BJ (cell line): ENCODE measurements at regions of chr10 and their contacts with region 1.

Region 1: GRCh38 chr10:104121520-104122224 is at the start of gene SFR1:
- DNase-seq: peak; percentile 94
- H3K4me3 ChIP-seq: peak within 1 kb of the TSS; percentile 70
- H3K27me3 ChIP-seq: no peaks in the 10 kb centered on the region
- CTCF ChIP-seq: peak; percentile 60
- polyA plus RNA-seq, gene SFR1: 1.5 and 2.4 TPM in 2 replicates

Region 2: DNA sequence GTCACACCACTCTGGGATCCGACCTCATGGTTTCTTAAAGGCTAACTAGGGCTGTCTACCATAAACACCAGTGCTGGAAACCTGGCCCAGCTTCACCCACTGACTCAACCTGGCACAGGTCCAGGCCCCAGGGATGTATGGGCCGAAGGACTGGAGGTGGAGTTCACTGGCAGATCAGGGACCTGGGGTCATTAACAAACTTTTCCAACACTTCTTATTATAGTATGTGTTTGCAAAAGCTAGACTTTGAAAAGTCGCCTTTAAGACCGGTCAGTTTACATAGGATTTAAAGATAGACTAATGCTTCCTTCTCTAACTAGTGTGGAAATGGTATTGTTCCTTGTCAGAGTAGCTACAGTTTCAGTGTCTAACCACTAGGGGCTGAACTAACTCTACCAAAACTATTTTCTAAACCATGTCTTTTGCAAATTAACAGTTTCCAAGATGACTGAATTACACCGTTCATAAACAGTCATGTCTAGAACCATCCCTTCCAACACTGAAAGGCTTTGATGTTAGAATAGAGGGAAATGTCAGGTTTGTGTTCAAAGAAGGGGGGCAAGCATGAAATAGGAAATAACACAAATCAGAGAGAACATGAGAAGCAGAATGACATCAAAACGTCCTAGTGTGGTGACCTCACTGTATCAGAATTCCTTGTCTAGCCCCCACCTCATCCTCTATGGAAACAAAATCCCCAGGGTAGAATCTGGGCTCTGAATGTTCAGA is 233.4 kb before region 1 on chr10:
- CTCF ChIA-PET with region 1: interaction called, 12 read pairs
- POLR2A ChIA-PET with region 1: no interaction called
- DNase-seq: peak; percentile 31
- H3K4me3 ChIP-seq: no peak overlapping the region
- H3K27me3 ChIP-seq: no peaks in the 10 kb centered on the region
- CTCF ChIP-seq: peak; percentile 77

Region 3: DNA sequence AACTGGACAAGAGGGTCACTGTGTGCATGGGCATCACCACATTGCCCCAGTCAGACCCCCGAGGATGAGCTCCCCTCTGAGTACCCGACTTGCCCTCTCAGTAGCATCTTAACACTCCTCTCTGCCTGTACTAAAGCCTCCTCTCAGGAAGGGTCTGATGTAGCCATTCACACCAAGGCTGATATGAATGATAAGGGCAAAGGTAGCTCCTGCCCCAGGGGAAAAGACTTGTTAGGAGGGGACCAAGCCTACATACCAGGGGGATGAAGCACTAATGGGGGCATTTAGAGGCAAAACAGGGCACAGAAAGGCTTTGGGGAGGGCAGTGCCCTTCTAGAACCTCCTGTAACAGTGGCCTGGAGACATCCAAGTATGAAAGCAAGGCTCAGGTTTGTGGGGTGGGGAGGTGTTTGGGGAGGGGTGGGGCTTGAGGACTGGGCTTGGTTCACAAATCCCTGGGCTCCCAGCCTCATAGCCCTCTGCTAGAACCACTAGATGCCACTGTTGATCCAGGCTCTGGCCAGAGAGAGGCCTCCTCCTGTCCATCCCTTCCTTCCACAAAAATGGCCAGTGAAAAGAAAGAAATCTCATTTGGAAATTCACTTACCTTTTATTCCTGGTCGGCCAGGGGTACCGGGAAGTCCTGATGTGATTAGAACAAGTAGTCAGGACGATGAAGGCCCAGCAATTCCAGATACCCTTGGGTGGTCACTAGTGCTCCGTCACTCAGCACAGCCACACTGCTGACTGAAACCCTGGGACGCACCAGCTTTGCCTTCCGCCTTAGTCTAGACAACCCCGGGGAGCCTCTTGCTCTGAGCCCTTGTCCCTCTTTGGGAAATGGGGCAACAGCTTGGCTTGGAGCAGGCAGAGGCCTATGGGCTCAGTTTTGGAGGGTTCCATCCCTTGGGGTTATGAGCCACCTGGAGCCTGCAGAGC is 76.3 kb before region 1 on chr10:
- CTCF ChIA-PET with region 1: interaction called, 50 read pairs
- POLR2A ChIA-PET with region 1: no interaction called
- DNase-seq: no peak
- H3K4me3 ChIP-seq: no peak overlapping the region
- H3K27me3 ChIP-seq: no peaks in the 10 kb centered on the region
- CTCF ChIP-seq: peak; percentile 88

Region 4: DNA sequence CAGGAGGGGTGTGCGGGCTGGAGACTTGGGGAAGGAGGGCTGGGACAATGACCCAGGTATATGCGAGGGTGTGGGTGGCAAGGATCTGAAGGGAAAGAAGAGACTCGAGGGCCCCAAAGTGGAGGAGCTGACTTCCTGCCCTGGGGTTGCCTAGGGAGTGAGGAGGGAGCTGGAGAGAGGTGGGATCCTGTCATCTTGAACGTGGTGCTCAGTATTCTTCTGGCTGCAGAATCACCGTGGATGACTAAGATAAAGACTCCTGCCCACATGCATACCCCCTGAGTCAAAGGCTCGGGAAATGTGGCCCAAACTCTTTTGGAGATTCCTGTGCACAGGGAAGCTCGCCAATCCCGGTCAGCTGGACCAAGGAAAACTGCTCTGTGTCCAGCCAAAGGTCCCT is 67.2 kb before region 1 on chr10:
- CTCF ChIA-PET with region 1: interaction called, 18 read pairs
- POLR2A ChIA-PET with region 1: no interaction called
- DNase-seq: peak; percentile 18
- H3K4me3 ChIP-seq: no peak overlapping the region
- H3K27me3 ChIP-seq: no peaks in the 10 kb centered on the region
- CTCF ChIP-seq: no peak

Region 5: GRCh38 chr10:104109908-104110662 is 11.6 kb before region 1 on chr10:
- CTCF ChIA-PET with region 1: interaction called, 12 read pairs
- POLR2A ChIA-PET with region 1: interaction called, 22 read pairs
- DNase-seq: peak; percentile 52
- H3K4me3 ChIP-seq: no peak overlapping the region
- H3K27me3 ChIP-seq: no peaks in the 10 kb centered on the region
- CTCF ChIP-seq: no peak

Region 6: GRCh38 chr10:104170610-104171254 is 49.1 kb after region 1 on chr10:
- CTCF ChIA-PET with region 1: no interaction called
- POLR2A ChIA-PET with region 1: no interaction called
- DNase-seq: no peak
- H3K4me3 ChIP-seq: no peak overlapping the region
- H3K27me3 ChIP-seq: peaks cover 11% of the 10 kb centered on the region
- CTCF ChIP-seq: no peak